ENCODE measurements at regions of chr5 and their contacts with region 1.

Region 1: GRCh38 chr5:116766470-116766947 is 191.9 kb upstream of the SEMA6A start:
- DNase-seq: peak in 1 of 2 donors; percentile 38
- H3K4me3 ChIP-seq: no peak overlapping the region
- H3K27ac ChIP-seq: no peak overlapping the region
- H3K4me1 ChIP-seq: no peaks in the 10 kb centered on the region
- H3K27me3 ChIP-seq: no peaks in the 10 kb centered on the region
- CTCF ChIP-seq: no peak

Region 2: GRCh38 chr5:116343961-116344360 is 422.5 kb before region 1 on chr5:
- intact Hi-C with region 1: no loop called
- DNase-seq: no peak
- H3K4me3 ChIP-seq: no peak overlapping the region
- H3K27ac ChIP-seq: no peak overlapping the region
- H3K4me1 ChIP-seq: no peaks in the 10 kb centered on the region
- H3K27me3 ChIP-seq: no peaks in the 10 kb centered on the region
- CTCF ChIP-seq: no peak

Region 3: DNA sequence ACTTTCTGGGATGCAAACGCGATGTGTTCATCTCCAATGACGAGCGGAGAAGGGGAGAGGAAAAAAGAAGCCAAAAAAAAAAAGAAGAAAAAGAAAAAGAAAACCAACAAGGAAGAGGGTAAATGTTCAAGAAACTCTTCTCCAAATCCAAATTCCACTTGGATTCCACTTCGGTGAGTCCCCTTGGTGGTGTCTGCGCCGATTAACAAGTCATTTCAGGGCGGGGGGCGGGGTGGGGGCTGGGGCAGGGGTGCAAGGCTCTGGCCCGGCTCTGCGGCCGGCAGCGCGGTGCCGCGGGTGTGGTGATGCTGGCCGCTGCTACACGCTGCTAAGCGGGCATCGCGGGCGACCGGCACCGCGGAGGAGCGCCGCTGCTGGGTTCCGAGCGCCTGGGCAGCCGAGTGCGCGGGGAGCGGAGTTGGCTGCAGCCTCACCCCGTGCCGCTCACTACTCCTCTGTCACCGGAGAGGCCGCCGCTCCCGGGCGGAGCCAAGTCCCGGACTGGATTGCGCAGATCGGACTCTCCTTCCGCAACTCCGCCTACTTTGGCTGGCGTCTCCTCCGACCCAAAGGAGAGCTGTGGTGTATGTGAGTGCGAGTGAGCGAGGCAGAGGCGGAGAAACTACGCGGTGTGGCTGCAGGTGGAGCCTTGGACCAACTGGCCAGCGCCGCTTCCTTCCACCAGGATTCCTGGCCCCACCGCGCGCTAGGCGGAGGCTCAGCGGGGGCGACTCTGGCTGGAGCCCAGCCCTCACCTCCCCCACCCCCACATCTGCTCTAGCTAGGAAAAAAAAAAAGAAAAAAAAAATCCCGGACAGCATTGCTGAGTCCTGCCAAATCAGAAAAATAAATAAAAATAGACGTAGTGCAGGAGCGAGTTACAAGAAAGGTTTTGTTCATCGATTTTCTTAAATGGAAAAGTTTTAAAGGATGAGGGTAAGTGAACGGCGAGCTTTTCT is 191.9 kb before region 1 on chr5 and contains the start of gene SEMA6A:
- intact Hi-C with region 1: loop called (anchors 10 kb)
- DNase-seq: peak; percentile 83 to 90
- H3K4me3 ChIP-seq: peak within 1 kb of the TSS; percentile 61 to 73
- H3K27ac ChIP-seq: peak within 1 kb of the TSS; percentile 23 to 44
- H3K4me1 ChIP-seq: peaks cover 0 to 43% (median 36%) of the 10 kb centered on the region in 4 donors
- H3K27me3 ChIP-seq: peaks cover 0 to 36% of the 10 kb centered on the region in 2 donors
- CTCF ChIP-seq: peak in 1 of 2 experiments; percentile 19

Measured in tibial artery (tissue), 4 donors.